ENCODE measurements at regions of chr5 and their contacts with region 1.

Region 1: DNA sequence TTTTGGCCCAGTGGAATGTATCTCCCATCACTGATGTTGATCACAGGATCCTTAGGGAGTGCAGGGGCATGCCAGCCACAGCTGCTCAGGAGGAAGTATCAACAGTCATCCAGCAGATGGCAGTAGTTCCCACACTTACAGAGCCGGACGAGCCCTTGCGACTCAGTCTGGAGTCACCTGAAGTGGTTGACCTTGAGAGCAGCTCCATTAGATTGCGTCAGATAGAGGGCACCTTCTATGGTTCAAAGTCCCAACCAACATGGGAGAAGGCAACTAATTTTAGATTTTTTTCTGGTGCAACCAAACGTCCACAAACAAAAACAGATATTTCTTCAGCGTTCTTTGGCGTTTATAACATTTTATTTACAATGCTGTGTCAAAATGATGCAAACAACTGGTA is 124.5 kb downstream of the EGFLAM start:
- DNase-seq: peak; percentile 46
- H3K4me3 ChIP-seq: no peak overlapping the region
- H3K27ac ChIP-seq: no peak overlapping the region
- H3K27me3 ChIP-seq: peaks cover 25% of the 10 kb centered on the region
- CTCF ChIP-seq: peak; percentile 86

Region 2: GRCh38 chr5:38396766-38397165 is 13.9 kb after region 1 on chr5:
- CTCF ChIA-PET with region 1: interaction called, 19 read pairs
- POLR2A ChIA-PET with region 1: no interaction called
- DNase-seq: no peak
- H3K4me3 ChIP-seq: no peak overlapping the region
- H3K27ac ChIP-seq: no peak overlapping the region
- H3K27me3 ChIP-seq: peaks cover 48% of the 10 kb centered on the region
- CTCF ChIP-seq: no peak

Region 3: GRCh38 chr5:38414348-38414747 is 31.4 kb after region 1 on chr5:
- CTCF ChIA-PET with region 1: interaction called, 18 read pairs
- POLR2A ChIA-PET with region 1: no interaction called
- DNase-seq: no peak
- H3K4me3 ChIP-seq: no peak overlapping the region
- H3K27ac ChIP-seq: no peak overlapping the region
- H3K27me3 ChIP-seq: peaks cover 16% of the 10 kb centered on the region
- CTCF ChIP-seq: no peak

Measured in AG04450 (cell line).